Upper lobe of right lung (tissue), 1 donor: ENCODE measurements at regions of chr2 and their contacts with region 1.

Region 1: GRCh38 chr2:227766373-227766883 is 20.7 kb downstream of the SCYGR8 start:
- DNase-seq: peak; percentile 82
- ATAC-seq: peak; percentile 99
- H3K4me3 ChIP-seq: no peak overlapping the region
- H3K27ac ChIP-seq: peak overlapping the region; percentile 49
- H3K4me1 ChIP-seq: peaks cover 3% of the 10 kb centered on the region
- H3K27me3 ChIP-seq: no peaks in the 10 kb centered on the region
- CTCF ChIP-seq: peak; percentile 91

Region 2: DNA sequence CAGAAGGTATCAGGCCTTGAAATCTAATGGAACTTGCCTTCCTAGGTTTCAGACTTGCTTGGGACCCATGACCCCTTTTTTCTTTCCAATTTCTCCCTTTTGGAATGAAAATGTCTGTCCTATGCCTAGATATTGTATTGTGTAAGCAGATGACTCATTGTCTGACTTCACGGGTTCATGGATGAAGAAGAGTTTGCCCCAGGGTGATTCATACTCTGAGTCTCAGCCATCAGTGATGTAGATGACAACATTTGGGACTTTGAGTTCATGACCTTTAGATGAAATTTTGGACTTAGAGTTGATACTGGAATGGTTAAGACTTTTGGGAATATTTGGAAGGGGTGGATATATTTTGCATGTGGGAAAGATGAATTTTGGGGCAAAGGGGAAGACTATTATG is 111.0 kb before region 1 on chr2:
- intact Hi-C with region 1: loop called (anchors 5 kb)
- DNase-seq: no peak
- ATAC-seq: peak; percentile 66
- H3K4me3 ChIP-seq: no peak overlapping the region
- H3K27ac ChIP-seq: no peak overlapping the region
- H3K4me1 ChIP-seq: no peaks in the 10 kb centered on the region
- H3K27me3 ChIP-seq: no peaks in the 10 kb centered on the region
- CTCF ChIP-seq: no peak